Left cardiac atrium (tissue), 4 donors: ENCODE measurements at regions of chr5 and their contacts with region 1.

Region 1: GRCh38 chr5:58849921-58850667 is 267.2 kb downstream of the RAB3C start:
- DNase-seq: no peak
- ATAC-seq: peak; percentile 65 to 67

Region 2: GRCh38 chr5:58498340-58498942 is 351.7 kb before region 1 on chr5:
- intact Hi-C with region 1: loop called in 1 of 2 experiments (anchors 2 kb)
- DNase-seq: peak; percentile 30
- ATAC-seq: peak in 1 of 2 donors; percentile 41

Region 3: GRCh38 chr5:58703925-58704555 is 146.1 kb before region 1 on chr5:
- intact Hi-C with region 1: no loop called
- DNase-seq: no peak
- ATAC-seq: no peak

Region 4: GRCh38 chr5:58828258-58828657 is 21.8 kb before region 1 on chr5:
- intact Hi-C with region 1: loop called in 1 of 2 experiments (anchors 2 kb)
- DNase-seq: no peak
- ATAC-seq: no peak